Activated naive CD4-positive, alpha-beta T cell treated with anti-CD3 and anti-CD28 coated beads for 36 hours (primary cell): ENCODE measurements at regions of chr21 and their contacts with region 1.

Region 1: GRCh38 chr21:14675774-14676530 is 129.8 kb upstream of the SAMSN1 start:
- DNase-seq: peak; percentile 28
- H3K4me3 Mint-ChIP-seq: peak overlapping the region; percentile 63
- H3K27ac Mint-ChIP-seq: peak overlapping the region; percentile 91
- H3K4me1 Mint-ChIP-seq: peaks cover 40% of the 10 kb centered on the region
- H3K27me3 Mint-ChIP-seq: no peaks in the 10 kb centered on the region

Region 2: DNA sequence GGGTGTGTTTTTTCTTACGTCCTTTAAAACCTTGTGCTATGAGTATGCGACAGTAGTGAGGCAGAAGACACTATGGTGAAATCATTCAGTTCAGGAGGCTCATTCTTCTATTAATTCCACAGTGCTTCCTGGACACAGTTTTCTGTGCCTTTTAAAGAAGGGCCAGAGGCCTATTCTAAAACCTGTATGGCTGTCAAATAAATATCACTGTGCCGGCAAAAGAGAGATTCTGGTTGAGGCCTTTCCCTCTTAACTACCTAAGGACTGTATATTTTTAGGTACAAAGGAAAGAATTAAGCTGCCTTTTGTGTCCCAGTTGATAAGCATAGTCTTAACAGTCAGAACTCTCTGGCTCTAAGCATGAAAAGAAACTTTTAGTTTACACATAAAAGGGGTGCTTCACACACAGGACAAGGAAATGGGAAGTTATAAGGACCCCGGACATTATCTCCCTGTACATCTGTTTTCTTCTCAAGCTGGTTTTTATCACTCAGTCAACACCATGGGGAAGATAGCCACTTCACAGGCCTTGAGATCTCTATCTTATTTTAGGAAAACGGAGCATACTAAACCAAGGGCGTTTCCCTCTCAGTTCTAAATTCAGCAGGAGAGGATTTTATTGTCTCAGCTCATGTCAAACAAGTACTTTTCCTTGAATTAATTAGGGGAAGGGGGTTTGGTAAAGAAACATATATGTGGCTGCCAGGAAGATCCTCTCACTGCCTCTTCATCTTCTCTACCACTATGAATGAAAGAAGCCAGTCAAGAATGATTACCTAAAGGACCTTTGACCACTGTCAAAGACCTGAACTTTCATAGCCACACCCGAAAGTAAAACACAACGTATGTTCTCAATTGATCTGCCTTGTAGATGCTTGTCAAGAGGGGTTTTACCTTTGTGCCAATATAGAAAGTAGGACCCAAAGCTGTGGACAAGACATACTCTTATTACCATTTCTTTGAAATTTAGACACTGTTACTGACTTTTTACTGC is 221.6 kb before region 1 on chr21:
- CTCF ChIA-PET with region 1: no interaction called
- intact Hi-C with region 1: loop called (anchors 2 kb)
- DNase-seq: no peak
- H3K4me3 Mint-ChIP-seq: no peak overlapping the region
- H3K27ac Mint-ChIP-seq: peak overlapping the region; percentile 88
- H3K4me1 Mint-ChIP-seq: peaks cover 48% of the 10 kb centered on the region
- H3K27me3 Mint-ChIP-seq: peaks cover 2% of the 10 kb centered on the region

Region 3: GRCh38 chr21:14591882-14592281 is 84.1 kb before region 1 on chr21:
- CTCF ChIA-PET with region 1: no interaction called
- intact Hi-C with region 1: loop called (anchors 5 kb)
- DNase-seq: no peak
- H3K4me3 Mint-ChIP-seq: no peak overlapping the region
- H3K27ac Mint-ChIP-seq: no peak overlapping the region
- H3K4me1 Mint-ChIP-seq: peaks cover 19% of the 10 kb centered on the region
- H3K27me3 Mint-ChIP-seq: no peaks in the 10 kb centered on the region

Region 4: DNA sequence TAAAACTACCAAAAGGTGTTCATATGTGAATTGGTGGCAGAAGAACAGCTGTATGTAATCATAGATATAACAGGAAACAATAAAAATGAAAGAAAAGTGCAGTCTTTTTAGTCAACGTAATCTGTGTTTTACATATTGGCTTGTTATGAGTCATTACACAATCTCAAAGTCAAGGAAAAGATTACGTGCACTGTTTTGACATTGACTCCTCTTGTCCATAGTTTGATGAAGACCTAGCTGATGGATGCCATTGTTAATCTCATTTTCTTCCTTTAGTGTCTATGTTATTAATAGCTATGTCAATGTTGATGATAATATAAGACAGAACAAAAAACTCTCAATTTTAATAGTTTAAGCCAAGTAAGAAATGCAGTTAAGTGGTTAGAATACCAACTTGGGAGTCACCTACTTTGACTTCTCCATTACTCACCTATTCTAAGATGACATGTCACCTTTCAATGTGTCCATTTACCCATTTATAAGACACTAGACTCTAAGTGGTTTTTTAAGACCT is 45.3 kb before region 1 on chr21:
- CTCF ChIA-PET with region 1: no interaction called
- intact Hi-C with region 1: loop called (anchors 1 kb)
- DNase-seq: no peak
- H3K4me3 Mint-ChIP-seq: no peak overlapping the region
- H3K27ac Mint-ChIP-seq: peak overlapping the region; percentile 65
- H3K4me1 Mint-ChIP-seq: peaks cover 19% of the 10 kb centered on the region
- H3K27me3 Mint-ChIP-seq: no peaks in the 10 kb centered on the region

Region 5: DNA sequence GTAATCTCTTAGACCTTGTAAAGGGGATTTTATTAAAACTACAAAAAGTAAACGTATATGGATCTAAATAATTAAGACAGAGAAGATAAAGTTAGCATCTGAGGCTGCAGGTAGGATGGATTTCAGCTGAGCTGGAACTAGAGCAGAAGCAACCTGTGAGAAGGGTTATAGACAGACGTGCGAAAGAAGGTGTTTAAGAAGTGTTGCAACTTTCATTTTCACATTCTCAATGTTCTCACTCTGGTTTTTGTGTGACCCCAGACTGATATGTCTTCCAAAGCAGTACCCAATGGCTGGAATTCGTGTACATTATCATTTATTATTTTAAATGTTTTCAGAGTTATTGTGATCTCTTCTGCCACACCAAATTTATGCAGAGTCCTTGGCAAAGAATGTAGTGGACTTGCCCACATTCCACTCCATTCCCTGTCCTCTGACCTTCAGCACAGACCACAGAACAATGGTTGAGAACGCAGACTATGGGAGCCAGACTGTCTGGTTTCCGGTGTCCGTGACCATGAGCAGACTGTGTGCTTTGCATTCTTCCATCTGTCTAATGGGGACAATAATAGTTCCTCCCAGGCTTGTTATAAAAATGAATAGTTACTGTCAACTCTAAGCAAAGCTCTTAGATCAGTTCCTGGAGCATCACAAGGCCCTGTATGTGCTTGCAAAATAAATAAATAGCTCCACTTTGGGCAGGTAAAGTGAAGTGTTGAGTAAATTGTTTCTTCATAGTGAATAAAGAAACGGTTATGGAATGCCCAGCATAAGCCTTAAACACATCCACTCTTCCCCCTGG is 10.7 kb after region 1 on chr21:
- CTCF ChIA-PET with region 1: interaction called, 4 read pairs
- intact Hi-C with region 1: loop called (anchors 1 kb)
- DNase-seq: no peak
- H3K4me3 Mint-ChIP-seq: no peak overlapping the region
- H3K27ac Mint-ChIP-seq: no peak overlapping the region
- H3K4me1 Mint-ChIP-seq: peaks cover 43% of the 10 kb centered on the region
- H3K27me3 Mint-ChIP-seq: no peaks in the 10 kb centered on the region

Region 6: DNA sequence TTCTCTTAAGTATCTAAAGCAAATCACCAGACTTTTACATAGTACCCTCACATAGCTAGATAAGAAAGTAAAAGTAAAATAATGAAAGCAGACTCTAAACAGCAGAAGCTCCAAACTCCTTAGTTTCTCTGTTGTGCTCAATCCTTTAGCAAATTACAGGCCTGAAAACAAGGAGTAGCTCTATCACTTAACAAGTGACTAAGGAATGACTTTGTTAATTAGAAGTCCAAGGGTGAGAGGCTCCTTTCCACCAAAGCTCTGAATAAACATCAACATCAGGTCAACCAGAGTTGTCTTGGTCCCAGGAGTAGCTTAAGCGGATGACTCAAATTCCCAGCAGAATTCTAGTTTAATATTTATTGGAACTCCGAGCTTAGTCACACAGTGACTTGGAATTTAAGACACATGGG is 382.9 kb after region 1 on chr21:
- CTCF ChIA-PET with region 1: no interaction called
- intact Hi-C with region 1: loop called (anchors 5 kb)
- DNase-seq: no peak
- H3K4me3 Mint-ChIP-seq: peak overlapping the region; percentile 65
- H3K27ac Mint-ChIP-seq: peak overlapping the region; percentile 70
- H3K4me1 Mint-ChIP-seq: peaks cover 75% of the 10 kb centered on the region
- H3K27me3 Mint-ChIP-seq: no peaks in the 10 kb centered on the region

Region 7: DNA sequence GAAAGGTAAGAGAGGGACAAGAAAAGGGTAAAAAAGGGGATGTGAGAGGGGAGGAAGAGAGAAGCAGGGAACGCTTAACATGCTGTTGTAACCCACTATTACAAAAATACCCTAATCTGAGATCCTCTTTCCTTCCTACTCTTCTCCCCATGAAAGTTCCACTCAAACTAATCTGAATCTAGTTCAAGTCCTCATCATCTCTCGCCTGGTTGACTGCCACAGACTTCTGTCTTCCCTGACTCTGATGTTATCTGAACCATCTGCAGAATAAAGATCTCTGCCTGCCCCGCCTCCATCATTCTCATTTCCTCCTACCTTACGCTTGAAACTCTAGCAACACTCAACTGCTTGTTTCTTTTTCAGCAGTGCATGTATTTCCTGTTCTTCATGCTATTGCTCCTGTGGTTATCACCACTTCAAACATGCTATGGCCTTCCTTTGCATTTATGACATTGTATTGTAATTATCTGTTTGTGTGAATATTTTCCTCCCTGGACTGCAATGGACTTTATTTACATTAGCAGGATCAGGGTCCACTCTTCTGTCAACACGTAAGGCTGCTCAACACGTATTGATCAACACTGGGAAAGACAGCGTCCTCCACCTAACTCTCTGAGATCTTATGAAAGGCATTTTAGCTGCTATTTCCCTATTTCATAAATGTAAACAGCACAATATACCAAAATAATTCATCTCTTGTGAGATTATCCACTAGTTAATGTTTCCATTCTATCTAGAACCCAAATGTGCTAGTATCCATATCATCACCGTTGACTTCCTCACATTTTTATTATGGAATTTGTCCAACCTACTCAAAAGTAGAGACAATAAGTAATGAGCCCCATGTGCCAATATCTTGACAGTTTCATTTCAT is 838.4 kb after region 1 on chr21:
- CTCF ChIA-PET with region 1: no interaction called
- intact Hi-C with region 1: loop called (anchors 10 kb)
- DNase-seq: peak; percentile 72
- H3K4me3 Mint-ChIP-seq: peak overlapping the region; percentile 55
- H3K27ac Mint-ChIP-seq: peak overlapping the region; percentile 85
- H3K4me1 Mint-ChIP-seq: peaks cover 28% of the 10 kb centered on the region
- H3K27me3 Mint-ChIP-seq: no peaks in the 10 kb centered on the region